Activated B cell treated with CpG ODN at 0.5 μM for 24 hours (primary cell): ENCODE measurements at regions of chr3 and their contacts with region 1.

Region 1: GRCh38 chr3:23276913-23277658 is 74.0 kb downstream of the UBE2E2 start:
- DNase-seq: no peak
- ATAC-seq: no peak
- H3K4me3 Mint-ChIP-seq: no peak overlapping the region
- H3K27ac Mint-ChIP-seq: no peak overlapping the region
- H3K4me1 Mint-ChIP-seq: peaks cover 42% of the 10 kb centered on the region
- H3K27me3 Mint-ChIP-seq: no peaks in the 10 kb centered on the region
- CTCF ChIP-seq: no peak

Region 2: DNA sequence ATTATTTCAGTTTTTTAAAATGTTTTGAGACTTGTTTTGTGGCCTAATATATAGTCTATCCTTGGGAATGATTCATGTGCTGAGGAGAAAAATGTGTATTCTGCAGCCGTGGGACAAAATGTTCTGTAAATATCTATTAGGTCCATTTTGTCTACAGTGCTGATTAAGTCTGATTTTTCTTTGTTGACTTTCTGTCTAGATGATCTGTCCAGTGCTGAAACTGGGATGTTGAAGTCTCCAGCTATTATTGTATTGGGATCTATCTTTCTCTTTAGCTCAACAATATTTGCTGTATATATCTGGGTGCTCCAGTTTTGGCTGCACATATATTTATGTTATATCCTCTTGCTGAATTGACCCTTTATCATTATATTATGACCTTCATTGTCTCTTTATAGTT is 11.2 kb after region 1 on chr3:
- CTCF ChIA-PET with region 1: no interaction called
- POLR2A ChIA-PET with region 1: no interaction called
- intact Hi-C with region 1: loop called (anchors 2 kb)
- DNase-seq: no peak
- ATAC-seq: no peak
- H3K4me3 Mint-ChIP-seq: no peak overlapping the region
- H3K27ac Mint-ChIP-seq: no peak overlapping the region
- H3K4me1 Mint-ChIP-seq: peaks cover 41% of the 10 kb centered on the region
- H3K27me3 Mint-ChIP-seq: no peaks in the 10 kb centered on the region
- CTCF ChIP-seq: no peak

Region 3: GRCh38 chr3:23312866-23313265 is 35.8 kb after region 1 on chr3:
- CTCF ChIA-PET with region 1: no interaction called
- POLR2A ChIA-PET with region 1: no interaction called
- intact Hi-C with region 1: no loop called
- DNase-seq: no peak
- ATAC-seq: no peak
- H3K4me3 Mint-ChIP-seq: no peak overlapping the region
- H3K27ac Mint-ChIP-seq: no peak overlapping the region
- H3K4me1 Mint-ChIP-seq: peaks cover 21% of the 10 kb centered on the region
- H3K27me3 Mint-ChIP-seq: no peaks in the 10 kb centered on the region
- CTCF ChIP-seq: no peak